Activated B cell treated with CpG ODN at 0.5 μM for 24 hours (primary cell): ENCODE measurements at regions of chr1 and their contacts with region 1.

Region 1: GRCh38 chr1:173429471-173430402 is 47.4 kb upstream of the PRDX6 start:
- DNase-seq: peak; percentile 54
- ATAC-seq: peak; percentile 87
- H3K4me3 Mint-ChIP-seq: peak overlapping the region; percentile 71
- H3K27ac Mint-ChIP-seq: peak overlapping the region; percentile 87
- H3K4me1 Mint-ChIP-seq: peaks cover 25% of the 10 kb centered on the region
- H3K27me3 Mint-ChIP-seq: no peaks in the 10 kb centered on the region
- CTCF ChIP-seq: no peak

Region 2: GRCh38 chr1:173202430-173203145 is 227.1 kb before region 1 on chr1:
- CTCF ChIA-PET with region 1: interaction called, 15 read pairs
- POLR2A ChIA-PET with region 1: interaction called, 4 read pairs
- intact Hi-C with region 1: no loop called
- DNase-seq: no peak
- ATAC-seq: no peak
- H3K4me3 Mint-ChIP-seq: no peak overlapping the region
- H3K27ac Mint-ChIP-seq: no peak overlapping the region
- H3K4me1 Mint-ChIP-seq: peaks cover 50% of the 10 kb centered on the region
- H3K27me3 Mint-ChIP-seq: no peaks in the 10 kb centered on the region
- CTCF ChIP-seq: no peak

Region 3: GRCh38 chr1:173367136-173367535 is 62.6 kb before region 1 on chr1:
- CTCF ChIA-PET with region 1: no interaction called
- POLR2A ChIA-PET with region 1: no interaction called
- intact Hi-C with region 1: no loop called
- DNase-seq: no peak
- ATAC-seq: no peak
- H3K4me3 Mint-ChIP-seq: no peak overlapping the region
- H3K27ac Mint-ChIP-seq: no peak overlapping the region
- H3K4me1 Mint-ChIP-seq: peaks cover 6% of the 10 kb centered on the region
- H3K27me3 Mint-ChIP-seq: no peaks in the 10 kb centered on the region
- CTCF ChIP-seq: no peak

Region 4: GRCh38 chr1:173714759-173715537 is 285.2 kb after region 1 on chr1 and contains the start of gene KLHL20:
- CTCF ChIA-PET with region 1: interaction called, 4 read pairs
- POLR2A ChIA-PET with region 1: interaction called, 7 read pairs
- intact Hi-C with region 1: loop called (anchors 1 kb)
- DNase-seq: peak; percentile 71
- ATAC-seq: peak; percentile 96
- H3K4me3 Mint-ChIP-seq: peak within 1 kb of the TSS; percentile 93
- H3K27ac Mint-ChIP-seq: peak within 1 kb of the TSS; percentile 89
- H3K4me1 Mint-ChIP-seq: peaks cover 22% of the 10 kb centered on the region
- H3K27me3 Mint-ChIP-seq: peaks cover 14% of the 10 kb centered on the region
- CTCF ChIP-seq: no peak
- total RNA-seq, gene KLHL20: 19.6 and 26.1 TPM in 2 replicates

Region 5: GRCh38 chr1:173937062-173937461 is 507.3 kb after region 1 on chr1:
- CTCF ChIA-PET with region 1: no interaction called
- POLR2A ChIA-PET with region 1: no interaction called
- intact Hi-C with region 1: loop called (anchors 5 kb)
- DNase-seq: no peak
- ATAC-seq: no peak
- H3K4me3 Mint-ChIP-seq: no peak overlapping the region
- H3K27ac Mint-ChIP-seq: no peak overlapping the region
- H3K4me1 Mint-ChIP-seq: no peaks in the 10 kb centered on the region
- H3K27me3 Mint-ChIP-seq: no peaks in the 10 kb centered on the region
- CTCF ChIP-seq: no peak